Caco-2 (cell line): ENCODE measurements at regions of chr4 and their contacts with region 1.

Region 1: DNA sequence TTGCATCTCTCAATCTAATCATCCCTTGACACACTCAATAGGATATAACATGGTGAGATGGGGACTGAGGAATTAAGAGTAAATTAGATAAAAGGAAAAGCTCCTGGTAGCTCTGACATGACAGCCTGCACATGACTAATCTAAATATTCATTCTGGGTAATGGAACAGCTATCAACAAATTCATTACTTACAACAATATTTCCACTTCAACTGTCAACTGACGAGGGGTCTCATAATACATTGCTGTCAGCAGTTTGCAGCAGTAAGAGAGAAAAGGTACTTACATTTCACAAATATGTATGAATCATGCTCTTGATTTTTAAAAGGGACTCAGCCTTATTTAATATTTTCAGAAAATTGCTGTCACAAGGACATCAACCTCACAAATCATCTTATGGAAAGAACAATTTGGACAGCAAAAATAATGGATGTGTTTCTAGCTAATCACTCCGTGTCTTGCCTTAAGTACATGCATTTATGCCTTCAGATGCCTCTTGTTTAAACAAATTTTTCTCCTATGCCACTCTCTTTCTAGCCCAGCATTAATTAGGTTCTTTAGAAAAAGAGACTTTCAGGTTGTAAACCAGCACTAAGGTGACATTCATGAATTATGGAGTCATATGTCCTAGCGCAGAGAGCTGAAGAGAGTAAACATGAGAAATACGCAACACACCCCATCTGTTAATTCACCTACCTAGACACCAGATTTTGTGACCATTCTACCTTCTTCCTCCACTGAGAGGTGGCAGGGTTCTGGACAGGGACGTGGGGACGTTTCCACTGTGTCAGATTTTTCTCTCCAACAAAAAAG is 99.6 kb upstream of the TMEM150C start:
- DNase-seq: no peak
- H3K4me3 ChIP-seq: no peak overlapping the region
- H3K4me3 Mint-ChIP-seq: no peak overlapping the region
- H3K27ac Mint-ChIP-seq: no peak overlapping the region
- H3K4me1 ChIP-seq: peaks cover 22% of the 10 kb centered on the region
- H3K4me1 Mint-ChIP-seq: peaks cover 6% of the 10 kb centered on the region
- H3K27me3 ChIP-seq: no peaks in the 10 kb centered on the region
- H3K27me3 Mint-ChIP-seq: no peaks in the 10 kb centered on the region
- CTCF ChIP-seq: no peak

Region 2: DNA sequence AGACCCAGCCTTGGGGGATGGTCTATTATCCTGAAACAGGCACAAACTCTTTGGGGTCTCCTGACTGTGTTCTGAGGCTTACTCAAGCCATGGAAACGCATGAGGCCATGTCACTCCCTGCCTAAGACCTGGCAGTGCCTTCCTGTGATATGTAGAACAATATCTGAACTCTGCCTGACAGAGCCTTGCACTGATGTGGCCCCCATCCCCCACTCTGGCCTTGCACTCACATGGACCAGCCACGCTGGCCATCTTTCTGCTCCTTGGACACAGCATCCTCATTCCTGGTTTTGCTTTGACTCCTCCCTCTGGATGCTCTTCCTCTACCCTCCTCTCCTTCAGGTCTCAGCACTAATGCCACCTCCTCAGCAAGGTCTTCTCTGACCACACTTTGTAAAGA is 37.0 kb after region 1 on chr4:
- CTCF ChIA-PET with region 1: interaction called, 3 read pairs
- POLR2A ChIA-PET with region 1: no interaction called
- intact Hi-C with region 1: loop called (anchors 1 kb)
- DNase-seq: no peak
- H3K4me3 ChIP-seq: no peak overlapping the region
- H3K4me3 Mint-ChIP-seq: no peak overlapping the region
- H3K27ac Mint-ChIP-seq: no peak overlapping the region
- H3K4me1 ChIP-seq: no peaks in the 10 kb centered on the region
- H3K4me1 Mint-ChIP-seq: peaks cover 12% of the 10 kb centered on the region
- H3K27me3 ChIP-seq: no peaks in the 10 kb centered on the region
- H3K27me3 Mint-ChIP-seq: no peaks in the 10 kb centered on the region
- CTCF ChIP-seq: no peak